ENCODE measurements at regions of chr3 and their contacts with region 1.

Region 1: DNA sequence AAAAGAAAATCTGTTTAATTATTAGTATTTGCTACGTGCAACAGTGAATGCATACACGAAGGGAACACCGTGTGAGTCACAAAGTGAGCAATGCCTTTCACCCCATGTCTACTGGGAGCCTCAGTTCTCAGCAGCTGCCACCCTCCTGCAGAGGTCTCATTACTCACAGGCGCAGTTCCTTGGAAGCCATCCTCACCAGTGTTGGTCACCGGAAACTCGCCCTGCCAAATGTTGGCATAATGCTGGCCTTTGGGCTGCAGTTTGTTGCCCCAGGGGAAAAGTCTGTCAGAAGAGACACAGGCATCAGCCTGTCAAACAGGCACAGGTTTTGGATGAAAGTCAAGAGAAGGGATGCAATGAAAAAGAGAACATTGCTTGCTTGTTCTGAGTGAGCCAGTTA is 50.1 kb downstream of the SUMF1 start:
- DNase-seq: peak; percentile 100
- ATAC-seq: peak; percentile 86
- H3K4me3 ChIP-seq: peak overlapping the region; percentile 43; the same call in 1 of the 2 replicates
- H3K27ac ChIP-seq: peak overlapping the region; percentile 99
- H3K4me1 ChIP-seq: peaks cover 72% of the 10 kb centered on the region
- H3K27me3 ChIP-seq: no peaks in the 10 kb centered on the region
- CTCF ChIP-seq: no peak

Region 2: GRCh38 chr3:4251412-4251811 is 165.5 kb before region 1 on chr3:
- CTCF ChIA-PET with region 1: no interaction called
- POLR2A ChIA-PET with region 1: no interaction called
- intact Hi-C with region 1: no loop called
- DNase-seq: no peak
- ATAC-seq: no peak
- H3K4me3 ChIP-seq: no peak overlapping the region
- H3K27ac ChIP-seq: no peak overlapping the region
- H3K4me1 ChIP-seq: no peaks in the 10 kb centered on the region
- H3K27me3 ChIP-seq: no peaks in the 10 kb centered on the region
- CTCF ChIP-seq: no peak

Region 3: GRCh38 chr3:4350789-4351163 is 66.2 kb before region 1 on chr3:
- CTCF ChIA-PET with region 1: interaction called, 12 read pairs
- POLR2A ChIA-PET with region 1: no interaction called
- intact Hi-C with region 1: loop called (anchors 2 kb)
- DNase-seq: peak; percentile 76
- ATAC-seq: peak; percentile 78
- H3K4me3 ChIP-seq: no peak overlapping the region
- H3K27ac ChIP-seq: no peak overlapping the region
- H3K4me1 ChIP-seq: peaks cover 10% of the 10 kb centered on the region
- H3K27me3 ChIP-seq: no peaks in the 10 kb centered on the region
- CTCF ChIP-seq: peak; percentile 93

Region 4: DNA sequence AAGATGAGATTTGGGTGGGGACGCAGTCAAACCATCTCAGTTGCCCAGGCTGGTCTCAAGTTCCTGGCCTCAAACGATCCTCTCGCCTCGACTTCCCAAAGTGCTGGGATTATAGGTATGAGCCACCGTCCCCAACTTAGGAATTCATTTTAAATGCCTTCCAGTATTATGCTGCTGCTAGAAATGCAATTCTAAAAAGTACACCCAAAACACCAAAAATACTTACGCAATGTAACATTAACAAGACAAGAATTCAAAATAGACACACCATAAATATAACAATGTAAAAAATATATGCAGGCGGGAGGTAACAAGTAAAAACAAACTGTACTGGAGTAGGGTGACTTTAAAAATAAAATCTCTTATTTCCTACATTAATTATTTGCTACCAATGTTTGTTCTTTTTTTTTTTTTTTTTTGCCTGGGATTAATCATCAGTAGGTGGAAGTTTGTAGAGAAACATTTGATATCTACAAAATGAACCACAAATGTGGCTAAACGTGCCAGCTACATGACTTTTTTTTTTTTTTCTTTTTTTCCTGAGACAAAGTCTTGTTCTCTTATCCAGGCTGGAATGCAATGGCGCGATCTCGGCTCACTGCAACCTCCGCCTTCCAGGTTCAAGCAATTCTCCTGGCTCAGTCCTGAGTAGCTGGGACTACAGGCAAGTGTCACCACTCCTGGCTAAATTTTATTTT is 57.0 kb before region 1 on chr3:
- CTCF ChIA-PET with region 1: interaction called, 11 read pairs
- POLR2A ChIA-PET with region 1: no interaction called
- intact Hi-C with region 1: loop called (anchors 2 kb)
- DNase-seq: no peak
- ATAC-seq: no peak
- H3K4me3 ChIP-seq: no peak overlapping the region
- H3K27ac ChIP-seq: no peak overlapping the region
- H3K4me1 ChIP-seq: no peaks in the 10 kb centered on the region
- H3K27me3 ChIP-seq: no peaks in the 10 kb centered on the region
- CTCF ChIP-seq: no peak

Region 5: GRCh38 chr3:4385201-4385600 is 31.8 kb before region 1 on chr3:
- CTCF ChIA-PET with region 1: no interaction called
- POLR2A ChIA-PET with region 1: no interaction called
- intact Hi-C with region 1: no loop called
- DNase-seq: no peak
- ATAC-seq: no peak
- H3K4me3 ChIP-seq: no peak overlapping the region
- H3K27ac ChIP-seq: no peak overlapping the region
- H3K4me1 ChIP-seq: no peaks in the 10 kb centered on the region
- H3K27me3 ChIP-seq: no peaks in the 10 kb centered on the region
- CTCF ChIP-seq: no peak

Region 6: GRCh38 chr3:4466741-4467521 is 50.0 kb after region 1 on chr3 and contains the start of gene SUMF1:
- CTCF ChIA-PET with region 1: no interaction called
- POLR2A ChIA-PET with region 1: interaction called, 3 read pairs
- intact Hi-C with region 1: loop called (anchors 2 kb)
- DNase-seq: peak; percentile 83
- ATAC-seq: peak; percentile 98
- H3K4me3 ChIP-seq: peak within 1 kb of the TSS; percentile 79
- H3K27ac ChIP-seq: peak within 1 kb of the TSS; percentile 63
- H3K4me1 ChIP-seq: no peaks in the 10 kb centered on the region
- H3K27me3 ChIP-seq: no peaks in the 10 kb centered on the region
- CTCF ChIP-seq: no peak
- total RNA-seq, gene SUMF1: 79.1 and 81.5 TPM in 2 replicates

Region 7: DNA sequence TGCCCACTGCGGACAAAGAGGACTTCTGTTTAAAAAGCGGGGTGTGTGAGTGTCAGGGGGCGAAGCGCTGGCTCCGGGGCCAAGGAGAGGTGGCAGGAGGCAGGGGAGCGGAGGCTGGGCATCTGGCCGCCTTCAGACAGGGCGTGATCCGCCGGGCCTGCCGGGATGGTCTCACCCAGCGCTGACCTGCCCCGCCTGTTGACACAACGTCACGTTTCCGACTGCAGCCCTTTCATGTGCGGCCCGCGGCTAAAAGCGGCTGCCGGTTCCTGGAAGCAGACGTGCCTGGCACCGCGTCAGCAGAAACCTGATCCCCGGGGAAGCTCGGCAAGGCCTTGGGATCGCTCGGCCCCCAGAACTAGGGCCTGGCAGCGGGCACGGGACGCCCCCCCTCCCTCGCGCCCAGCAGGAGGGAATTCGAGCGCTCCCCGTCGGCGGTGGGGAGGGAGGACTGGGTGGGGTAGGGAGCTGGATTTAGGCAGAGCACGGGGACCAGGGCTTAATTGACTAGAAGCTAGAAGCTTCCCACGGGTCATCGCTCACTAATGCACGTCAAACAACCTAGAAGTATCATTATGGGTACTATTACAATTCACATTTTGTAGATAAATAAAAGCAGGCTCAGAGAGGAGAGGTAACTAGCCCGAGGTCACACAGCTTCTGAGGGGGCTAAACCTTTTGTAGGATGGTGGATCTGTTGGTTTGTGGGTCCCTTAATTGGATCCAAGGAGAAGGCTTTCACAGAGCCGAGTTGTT is 570.0 kb after region 1 on chr3:
- CTCF ChIA-PET with region 1: no interaction called
- POLR2A ChIA-PET with region 1: no interaction called
- intact Hi-C with region 1: loop called (anchors 10 kb)
- DNase-seq: peak; percentile 98
- ATAC-seq: peak; percentile 69
- H3K4me3 ChIP-seq: peak overlapping the region; percentile 35; the same call in 1 of the 2 replicates
- H3K27ac ChIP-seq: peak overlapping the region; percentile 90
- H3K4me1 ChIP-seq: peaks cover 63% of the 10 kb centered on the region
- H3K27me3 ChIP-seq: no peaks in the 10 kb centered on the region
- CTCF ChIP-seq: 0 out of 2 replicates have a peak, but pooled peaks have one; percentile 25

Measured in PC-3 (cell line).